ENCODE measurements at regions of chr1 and their contacts with region 1.

Region 1: GRCh38 chr1:211654838-211655787 is 20.3 kb downstream of the NEK2 start:
- DNase-seq: peak; percentile 83 to 95 (median 92)
- ATAC-seq: peak; percentile 94
- H3K4me3 ChIP-seq: no peak overlapping the region
- H3K4me1 ChIP-seq: no peaks in the 10 kb centered on the region
- CTCF ChIP-seq: peak; percentile 78

Region 2: DNA sequence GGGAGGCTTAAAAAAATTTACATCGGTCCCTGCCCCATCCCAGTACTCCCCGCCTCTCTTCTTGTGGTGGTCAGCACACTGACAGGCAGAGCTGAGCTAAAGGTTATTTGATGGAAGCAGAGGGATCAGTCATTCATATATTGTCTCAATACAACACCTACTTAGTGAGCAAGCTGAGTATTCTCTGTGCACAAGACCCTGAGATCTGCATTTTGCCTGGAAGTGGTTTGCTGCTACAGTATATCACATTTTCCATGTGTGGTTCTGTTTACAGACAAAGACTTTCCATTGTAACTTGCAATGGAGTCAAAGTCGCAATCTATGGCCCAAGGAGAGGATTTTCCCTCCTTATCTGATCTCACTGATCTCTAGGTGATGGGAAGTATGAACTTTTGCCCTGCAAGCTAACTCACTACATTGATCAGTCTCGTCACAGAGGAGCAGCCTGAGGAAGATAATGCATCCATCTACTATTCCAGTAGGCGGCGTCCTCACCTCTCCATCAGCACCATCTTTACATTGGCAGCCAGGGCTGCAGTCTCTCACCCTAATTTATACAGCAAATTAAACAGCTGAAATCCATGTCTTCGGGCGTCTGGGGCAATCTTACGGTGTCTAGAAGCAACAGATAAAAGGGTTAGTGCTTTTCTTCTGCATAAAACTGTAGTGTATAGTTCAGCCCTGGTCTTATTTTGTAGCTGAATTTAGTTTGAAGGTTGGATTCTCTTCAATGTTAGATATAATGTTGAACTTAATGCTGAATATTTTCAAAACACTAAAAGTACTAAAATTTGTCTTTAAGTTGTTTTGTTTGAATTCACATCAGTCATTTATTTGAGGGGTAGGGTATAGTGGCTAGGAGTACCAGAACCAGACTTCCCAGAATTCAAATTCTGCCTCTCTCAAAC is 331.7 kb before region 1 on chr1:
- intact Hi-C with region 1: loop called in 1 of 2 experiments (anchors 10 kb)
- DNase-seq: peak in 1 of 3 donors; percentile 89
- ATAC-seq: peak; percentile 65
- H3K4me3 ChIP-seq: no peak overlapping the region
- H3K4me1 ChIP-seq: peaks cover 12% of the 10 kb centered on the region
- CTCF ChIP-seq: peak; percentile 65

Region 3: GRCh38 chr1:211476200-211476849 is 178.8 kb before region 1 on chr1:
- intact Hi-C with region 1: loop called in 1 of 2 experiments (anchors 10 kb)
- DNase-seq: peak in 2 of 3 donors; percentile 67 to 89
- ATAC-seq: peak; percentile 82
- H3K4me3 ChIP-seq: no peak overlapping the region
- H3K4me1 ChIP-seq: peaks cover 3% of the 10 kb centered on the region
- CTCF ChIP-seq: peak; percentile 82

Region 4: GRCh38 chr1:211514030-211514754 is 140.9 kb before region 1 on chr1:
- intact Hi-C with region 1: loop called in 1 of 2 experiments (anchors 10 kb)
- DNase-seq: peak; percentile 85 to 88 (median 87)
- ATAC-seq: peak; percentile 62
- H3K4me3 ChIP-seq: no peak overlapping the region
- H3K4me1 ChIP-seq: peaks cover 24% of the 10 kb centered on the region
- CTCF ChIP-seq: peak; percentile 58

Region 5: DNA sequence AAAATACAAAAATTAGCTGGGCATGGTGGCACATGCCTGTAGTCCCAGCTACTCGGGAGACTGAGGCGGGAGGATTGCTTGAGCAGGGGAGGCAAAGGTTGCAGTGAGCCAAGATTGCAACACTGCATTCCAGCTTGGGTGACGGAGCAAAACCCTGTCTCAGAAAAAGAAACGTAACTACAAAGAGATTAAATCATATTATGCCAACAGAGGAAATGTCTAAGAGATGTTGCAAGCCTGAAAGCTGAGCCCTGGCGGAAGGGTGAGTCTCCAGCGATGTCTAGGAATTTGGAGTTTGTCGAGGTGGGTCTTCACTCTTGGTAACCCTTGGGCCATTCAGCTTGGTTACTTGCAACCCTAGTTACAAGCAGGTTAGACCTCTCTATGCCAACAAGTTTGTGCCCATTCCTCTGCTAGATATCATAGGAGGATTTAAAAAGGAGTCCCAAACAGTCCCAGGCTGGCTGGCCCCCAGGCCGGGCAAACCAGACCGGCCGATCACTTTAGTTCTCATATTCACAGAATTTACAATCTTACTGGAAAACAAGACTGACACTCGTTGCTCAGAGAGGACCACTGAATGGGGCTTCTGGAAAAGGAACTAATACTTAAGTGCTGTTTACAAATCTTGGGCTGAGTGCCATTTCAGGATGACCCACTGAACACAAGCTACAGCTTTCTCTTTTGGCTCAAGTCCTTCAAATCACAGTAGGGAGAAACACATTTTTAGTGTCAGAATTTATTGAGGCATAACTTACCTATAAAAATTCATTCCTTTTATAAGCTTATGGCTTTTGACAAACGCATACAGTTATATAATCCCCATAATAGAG is 103.3 kb before region 1 on chr1:
- intact Hi-C with region 1: no loop called
- DNase-seq: no peak
- ATAC-seq: no peak
- H3K4me3 ChIP-seq: no peak overlapping the region
- H3K4me1 ChIP-seq: peaks cover 5% of the 10 kb centered on the region
- CTCF ChIP-seq: no peak

Region 6: DNA sequence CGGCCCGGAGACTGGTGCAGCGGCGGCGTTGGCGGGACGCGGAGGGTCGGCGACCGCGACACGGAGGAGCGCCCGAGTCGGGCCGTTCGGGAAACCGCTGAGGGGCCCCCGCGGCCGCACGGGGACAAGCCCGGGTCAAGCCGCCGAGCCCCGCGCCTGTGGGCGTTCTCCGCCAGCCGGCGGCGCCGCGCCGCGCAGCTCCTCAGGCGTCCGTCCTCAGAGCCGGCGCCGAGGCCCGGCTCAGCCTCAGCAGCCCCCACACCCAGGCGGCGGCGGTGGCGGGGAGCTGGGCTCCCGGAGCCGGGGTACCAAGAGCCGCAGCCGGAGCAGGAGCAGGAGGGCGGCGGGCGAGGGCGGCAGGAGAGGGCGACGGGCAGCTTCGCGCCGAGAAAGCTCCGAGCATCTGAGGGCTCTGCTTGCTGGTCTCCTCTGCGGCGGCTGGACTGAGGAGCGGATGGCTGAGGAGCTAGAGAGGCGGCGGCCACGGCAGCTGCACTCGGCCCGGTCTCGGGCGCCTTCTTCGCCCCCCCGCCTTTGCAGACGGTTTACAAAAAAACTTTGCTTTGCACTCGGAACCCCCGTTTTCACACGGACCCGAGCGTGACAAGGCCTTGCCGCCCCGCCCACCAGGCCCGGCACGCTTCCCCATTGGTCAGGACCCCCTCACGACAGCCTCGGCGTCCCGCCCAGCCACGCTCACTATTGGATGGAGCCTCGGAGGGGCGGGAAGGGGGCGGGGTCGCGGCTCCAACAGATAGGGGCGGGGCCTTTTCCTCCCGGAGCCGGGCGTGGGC is 76.3 kb before region 1 on chr1 and contains the start of gene SLC30A1:
- intact Hi-C with region 1: loop called in 1 of 2 experiments (anchors 5 kb)
- DNase-seq: peak; percentile 99 to 100 (median 100)
- ATAC-seq: peak; percentile 92
- H3K4me3 ChIP-seq: peak within 1 kb of the TSS; percentile 94
- H3K4me1 ChIP-seq: peaks cover 12% of the 10 kb centered on the region
- CTCF ChIP-seq: no peak
- total RNA-seq, gene SLC30A1: 20.8 to 43.5 (median 29.2) TPM

Region 7: GRCh38 chr1:211870156-211870555 is 215.0 kb after region 1 on chr1:
- intact Hi-C with region 1: no loop called
- DNase-seq: no peak
- ATAC-seq: no peak
- H3K4me3 ChIP-seq: no peak overlapping the region
- H3K4me1 ChIP-seq: no peaks in the 10 kb centered on the region
- CTCF ChIP-seq: no peak

Measured in mucosa of descending colon (tissue), 3 donors.